CD8-positive, alpha-beta T cell (primary cell): ENCODE measurements at regions of chr16 and their contacts with region 1.

Region 1: DNA sequence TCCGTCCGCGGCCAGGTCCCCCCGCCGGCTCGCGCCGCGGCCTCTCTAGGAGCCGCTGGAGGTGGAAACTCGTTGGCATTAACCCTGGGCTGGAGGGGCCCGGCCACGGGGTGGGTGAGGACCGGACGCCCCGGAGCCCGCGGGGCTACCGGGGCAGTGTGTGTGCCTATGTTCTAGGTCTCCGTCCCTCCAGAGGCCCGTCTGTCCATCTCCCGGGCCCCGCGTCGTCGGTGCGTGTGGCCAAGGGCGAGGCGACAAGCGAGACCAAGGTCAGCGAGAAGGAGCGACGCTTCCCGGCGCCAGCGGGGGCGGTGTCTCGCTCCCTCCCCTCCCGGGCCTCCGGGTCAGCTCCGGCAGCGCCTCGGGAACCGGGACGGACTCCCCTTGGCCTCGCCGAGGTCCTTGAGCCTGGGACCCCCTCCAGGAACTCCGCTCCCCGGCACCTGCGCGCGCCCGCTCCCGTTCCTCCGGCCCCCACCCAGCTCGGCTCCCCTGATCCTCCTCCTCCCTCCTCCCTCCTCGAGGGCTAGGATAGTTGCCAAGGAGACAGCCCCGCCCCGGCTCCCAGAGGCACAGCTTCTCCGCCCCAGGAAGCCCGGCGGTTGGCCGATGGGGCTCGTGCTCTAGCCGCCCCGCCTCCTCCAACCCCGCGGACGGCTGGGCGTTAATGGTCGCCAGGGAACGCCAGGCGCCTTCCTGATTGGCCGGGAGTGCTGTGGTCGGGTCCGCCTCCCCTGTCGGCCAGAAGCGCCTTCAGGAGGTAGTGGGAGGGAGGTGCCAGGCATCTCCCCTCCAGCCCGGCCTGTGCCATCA is 663 bp upstream of the ZNF768 start:
- DNase-seq: peak; percentile 53 to 92 (median 86)
- ATAC-seq: peak; percentile 75
- H3K4me3 ChIP-seq: peak overlapping the region; percentile 74 to 75
- H3K4me3 Mint-ChIP-seq: peak overlapping the region; percentile 87
- H3K27ac ChIP-seq: peak overlapping the region; percentile 59 to 69
- H3K27ac Mint-ChIP-seq: peak overlapping the region; percentile 90
- H3K4me1 ChIP-seq: peaks cover 12% of the 10 kb centered on the region
- H3K4me1 Mint-ChIP-seq: peaks cover 24% of the 10 kb centered on the region
- H3K27me3 ChIP-seq: no peaks in the 10 kb centered on the region
- H3K27me3 Mint-ChIP-seq: no peaks in the 10 kb centered on the region
- CTCF ChIP-seq: no peak

Region 2: DNA sequence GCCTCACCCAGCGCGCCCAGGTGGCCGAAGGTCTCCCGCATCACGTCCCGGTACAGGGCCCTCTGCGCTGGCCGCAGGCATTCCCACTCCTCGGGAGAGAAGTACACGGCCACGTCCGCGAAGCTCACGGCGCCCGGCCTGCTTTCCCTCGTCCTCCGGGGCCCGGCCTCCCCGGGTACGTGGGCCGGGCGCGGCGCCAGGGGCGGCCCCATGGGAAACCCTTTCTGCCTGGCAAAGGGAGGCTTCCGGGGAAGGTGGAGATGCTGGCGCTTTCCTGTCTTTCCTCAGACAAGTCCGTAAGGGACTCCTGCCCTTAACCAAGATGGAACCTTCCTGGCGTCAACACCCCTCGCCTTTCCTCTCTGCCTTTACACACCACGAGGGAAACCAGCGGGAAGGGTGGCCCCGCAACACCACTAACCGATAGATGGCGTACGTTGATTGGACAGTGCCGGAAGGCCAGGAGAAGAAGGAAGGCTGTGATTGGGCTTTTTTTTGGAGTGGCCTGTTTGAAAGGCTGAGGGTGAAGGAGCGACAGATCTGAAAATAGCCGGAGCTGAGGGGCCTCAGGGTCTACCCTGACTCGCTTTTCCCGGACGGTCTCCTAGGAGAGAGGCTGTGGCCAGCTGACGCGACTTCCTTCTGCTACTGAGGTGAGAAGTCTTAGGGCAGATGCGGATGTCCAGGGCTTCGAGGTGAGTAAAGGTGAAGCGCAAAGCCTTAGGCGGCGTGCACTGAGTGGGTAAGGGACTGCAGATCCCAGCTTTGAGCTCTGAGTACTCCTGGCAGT is 58.6 kb after region 1 on chr16 and contains the start of gene ZNF785:
- CTCF ChIA-PET with region 1: no interaction called
- POLR2A ChIA-PET with region 1: no interaction called
- intact Hi-C with region 1: loop called in 1 of 2 experiments (anchors 1 kb)
- DNase-seq: peak; percentile 81 to 98 (median 91)
- ATAC-seq: peak; percentile 99
- H3K4me3 ChIP-seq: peak within 1 kb of the TSS; percentile 68 to 78
- H3K4me3 Mint-ChIP-seq: peak within 1 kb of the TSS; percentile 94
- H3K27ac ChIP-seq: peak within 1 kb of the TSS; percentile 44 to 61
- H3K27ac Mint-ChIP-seq: peak within 1 kb of the TSS; percentile 91
- H3K4me1 ChIP-seq: peaks cover 12% of the 10 kb centered on the region
- H3K4me1 Mint-ChIP-seq: peaks cover 27% of the 10 kb centered on the region
- H3K27me3 ChIP-seq: no peaks in the 10 kb centered on the region
- H3K27me3 Mint-ChIP-seq: no peaks in the 10 kb centered on the region
- CTCF ChIP-seq: no peak
- total RNA-seq, gene ZNF785: 5.0 to 6.9 TPM